ENCODE measurements at regions of chr14 and their contacts with region 1.

Region 1: DNA sequence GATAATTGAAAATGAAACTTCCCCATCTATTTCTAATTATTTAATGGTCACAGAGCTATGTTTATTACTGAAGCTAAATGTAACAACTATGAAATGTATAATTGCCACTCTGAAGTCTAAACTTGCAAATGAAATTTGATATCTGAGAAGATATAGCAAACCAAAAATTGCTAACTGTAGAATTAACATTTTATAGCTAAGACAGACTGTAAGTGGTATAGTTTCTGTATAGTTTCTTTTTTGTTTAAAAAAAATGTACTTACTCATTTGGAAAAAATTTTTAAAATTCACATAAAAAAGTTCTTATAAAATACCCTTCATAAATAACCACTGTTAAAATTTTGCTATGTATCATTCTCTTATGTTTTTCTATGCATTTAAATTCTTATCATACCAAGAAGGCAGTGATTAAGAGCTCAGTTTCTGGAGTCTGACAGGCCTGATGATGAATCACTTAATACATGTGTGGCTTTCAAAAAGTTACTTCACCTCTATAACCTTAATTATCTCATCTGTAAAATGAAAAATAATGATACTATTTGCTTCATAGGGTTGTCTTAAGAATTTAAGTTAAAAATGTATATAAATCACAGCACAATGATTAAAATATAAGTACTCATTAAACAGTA is 214.7 kb upstream of the GARIN2 start:
- DNase-seq: peak in 1 of 2 experiments; percentile 67
- H3K4me3 ChIP-seq: no peak overlapping the region
- H3K27ac ChIP-seq: 0 out of 2 replicates have a peak overlapping the region, but pooled peaks have one; percentile 4
- H3K4me1 ChIP-seq: 0 out of 2 replicates have a peak, but pooled peaks cover 4% of the 10 kb centered on the region
- H3K27me3 ChIP-seq: no peaks in the 10 kb centered on the region
- CTCF ChIP-seq: no peak

Region 2: DNA sequence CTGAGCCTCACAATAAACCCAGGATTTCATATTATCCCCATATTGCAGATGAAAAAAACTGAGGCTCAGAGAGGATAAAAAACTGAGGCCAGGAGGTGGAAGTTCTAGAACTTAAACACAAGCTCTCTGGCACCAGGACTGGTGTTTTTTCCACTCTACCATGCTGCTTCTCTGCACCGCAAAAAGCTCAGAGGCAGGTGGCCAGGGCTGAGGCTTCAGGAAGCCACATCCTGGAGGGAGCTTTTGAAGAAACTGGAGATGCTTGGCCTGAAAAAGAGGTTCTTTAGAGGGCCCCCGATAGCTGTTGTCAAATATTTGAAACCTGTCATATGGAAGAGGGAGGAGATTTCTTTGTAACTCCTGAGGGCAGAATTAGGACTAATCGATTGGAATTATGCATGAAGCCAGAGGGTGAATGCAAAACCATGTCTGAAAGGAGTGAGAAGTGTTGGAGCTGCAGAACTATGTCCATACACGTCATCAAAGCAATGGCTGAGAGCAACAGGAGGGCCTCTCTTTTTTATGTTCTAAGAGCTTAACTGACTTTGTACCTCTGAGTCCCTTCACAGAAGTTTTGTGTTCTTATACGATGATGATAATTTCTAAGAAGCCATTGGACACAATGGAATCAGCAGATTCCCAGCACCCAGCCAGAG is 1113.4 kb before region 1 on chr14:
- CTCF ChIA-PET with region 1: no interaction called
- POLR2A ChIA-PET with region 1: no interaction called
- intact Hi-C with region 1: no loop called
- DNase-seq: no peak
- H3K4me3 ChIP-seq: no peak overlapping the region
- H3K27ac ChIP-seq: no peak overlapping the region
- H3K4me1 ChIP-seq: no peaks in the 10 kb centered on the region
- H3K27me3 ChIP-seq: peaks cover 8% of the 10 kb centered on the region; the same call in 1 of the 2 replicates
- CTCF ChIP-seq: no peak

Region 3: GRCh38 chr14:66920196-66920595 is 54.3 kb before region 1 on chr14:
- CTCF ChIA-PET with region 1: interaction called, 14 read pairs
- POLR2A ChIA-PET with region 1: no interaction called
- intact Hi-C with region 1: no loop called
- DNase-seq: no peak
- H3K4me3 ChIP-seq: no peak overlapping the region
- H3K27ac ChIP-seq: no peak overlapping the region
- H3K4me1 ChIP-seq: no peaks in the 10 kb centered on the region
- H3K27me3 ChIP-seq: no peaks in the 10 kb centered on the region
- CTCF ChIP-seq: no peak

Region 4: GRCh38 chr14:66932793-66933108 is 41.8 kb before region 1 on chr14:
- CTCF ChIA-PET with region 1: no interaction called
- POLR2A ChIA-PET with region 1: no interaction called
- intact Hi-C with region 1: loop called (anchors 5 kb)
- DNase-seq: no peak
- H3K4me3 ChIP-seq: no peak overlapping the region
- H3K27ac ChIP-seq: peak overlapping the region; percentile 23; the same call in 1 of the 2 replicates
- H3K4me1 ChIP-seq: peaks cover 14% of the 10 kb centered on the region
- H3K27me3 ChIP-seq: no peaks in the 10 kb centered on the region
- CTCF ChIP-seq: no peak

Region 5: DNA sequence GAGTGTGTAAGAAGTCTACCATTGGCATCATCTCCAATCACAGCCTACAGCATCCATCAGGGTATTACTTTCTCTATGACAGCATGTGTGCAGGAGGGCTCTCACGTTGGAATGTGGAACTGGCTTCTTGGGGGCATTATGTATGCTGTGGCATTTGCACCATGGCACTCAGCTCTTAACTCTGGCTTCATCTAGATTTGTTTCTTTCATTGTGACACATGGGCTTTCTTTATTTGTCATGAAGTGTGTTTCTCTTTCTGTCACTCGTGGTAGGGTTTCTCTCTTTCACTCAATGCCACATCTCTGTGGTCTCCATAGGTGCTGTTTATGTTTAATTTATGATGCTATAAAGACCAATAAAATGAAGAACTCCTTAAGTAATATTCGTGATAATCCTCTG is 23.5 kb after region 1 on chr14:
- CTCF ChIA-PET with region 1: no interaction called
- POLR2A ChIA-PET with region 1: interaction called, 15 read pairs
- intact Hi-C with region 1: no loop called
- DNase-seq: no peak
- H3K4me3 ChIP-seq: no peak overlapping the region
- H3K27ac ChIP-seq: no peak overlapping the region
- H3K4me1 ChIP-seq: no peaks in the 10 kb centered on the region
- H3K27me3 ChIP-seq: no peaks in the 10 kb centered on the region
- CTCF ChIP-seq: no peak